SK-N-SH (cell line): ENCODE measurements at regions of chr3 and their contacts with region 1.

Region 1: DNA sequence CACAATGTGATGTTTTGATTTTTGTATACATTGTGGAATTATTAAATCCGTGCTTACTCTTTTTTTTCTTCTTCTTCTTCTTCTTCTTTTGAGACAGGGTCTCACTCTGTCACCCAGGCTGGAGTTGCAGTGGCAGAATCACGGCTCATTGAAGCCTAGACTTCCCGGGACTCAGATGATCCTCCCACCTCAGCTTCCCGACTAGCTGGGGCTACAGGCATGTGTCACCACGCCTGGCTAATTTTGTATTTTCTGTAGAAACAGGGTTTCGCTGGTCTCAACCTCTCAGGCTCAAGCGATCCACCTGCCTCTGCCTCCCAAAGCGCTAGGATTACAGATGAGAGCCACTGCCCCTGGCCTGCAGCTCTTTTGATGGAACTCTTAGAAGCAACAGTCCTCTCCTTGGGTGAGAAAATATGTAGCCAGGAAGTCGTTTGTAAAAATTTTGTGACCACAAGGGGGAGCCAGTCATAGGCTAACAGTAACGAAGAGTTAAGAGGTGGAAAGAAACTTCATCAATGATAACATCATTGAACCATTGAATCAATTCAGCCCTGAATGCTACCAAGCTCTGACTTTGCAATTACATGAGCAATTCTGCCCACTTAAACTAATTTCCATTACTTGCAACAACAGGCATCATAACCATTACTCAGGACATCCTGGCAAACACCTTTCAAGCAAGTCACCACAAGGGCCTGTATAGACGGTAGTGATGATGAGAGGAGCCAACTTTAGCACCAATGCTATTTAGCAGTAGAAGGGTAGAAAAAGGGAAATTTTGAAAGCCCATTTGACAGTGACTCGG is 16.7 kb upstream of the CMTM7 start:
- DNase-seq: peak; percentile 53
- H3K4me3 ChIP-seq: no peak overlapping the region; a peak in 1 of 4 replicates
- H3K27ac ChIP-seq: no peak overlapping the region
- H3K4me1 ChIP-seq: no peaks in the 10 kb centered on the region
- H3K27me3 ChIP-seq: no peaks in the 10 kb centered on the region
- CTCF ChIP-seq: peak; percentile 72
- EP300 ChIP-seq: no peak
- RAD21 ChIP-seq: peak; percentile 67

Region 2: DNA sequence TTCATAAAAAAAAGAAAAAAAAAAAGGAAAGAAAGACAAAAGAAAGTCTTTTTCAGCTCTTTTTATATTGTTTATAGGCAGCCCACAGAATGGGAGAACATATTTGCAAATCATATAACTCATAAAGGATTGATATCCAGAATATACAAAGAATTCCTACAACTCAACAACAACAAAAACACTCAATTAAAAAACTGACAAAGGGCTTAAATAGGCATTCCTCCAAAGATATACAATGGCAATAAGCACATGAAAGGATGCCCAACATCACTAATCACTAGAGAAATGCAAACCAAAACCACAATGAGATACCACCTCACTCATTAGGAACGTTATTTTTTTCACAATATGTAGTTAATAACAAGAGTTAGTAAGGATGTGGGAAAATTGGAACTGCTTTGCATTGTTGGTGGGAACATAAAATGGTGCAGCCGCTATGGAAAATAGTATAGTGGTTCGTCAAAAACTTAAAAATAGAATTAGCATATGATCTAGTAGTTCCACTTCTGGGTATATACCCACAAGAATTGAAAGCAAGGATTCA is 190.7 kb before region 1 on chr3:
- CTCF ChIA-PET with region 1: no interaction called
- POLR2A ChIA-PET with region 1: no interaction called
- DNase-seq: no peak
- H3K4me3 ChIP-seq: no peak overlapping the region
- H3K27ac ChIP-seq: no peak overlapping the region
- H3K4me1 ChIP-seq: no peaks in the 10 kb centered on the region; a peak in 1 of 4 replicates
- H3K27me3 ChIP-seq: no peaks in the 10 kb centered on the region
- CTCF ChIP-seq: no peak
- EP300 ChIP-seq: no peak
- RAD21 ChIP-seq: no peak

Region 3: DNA sequence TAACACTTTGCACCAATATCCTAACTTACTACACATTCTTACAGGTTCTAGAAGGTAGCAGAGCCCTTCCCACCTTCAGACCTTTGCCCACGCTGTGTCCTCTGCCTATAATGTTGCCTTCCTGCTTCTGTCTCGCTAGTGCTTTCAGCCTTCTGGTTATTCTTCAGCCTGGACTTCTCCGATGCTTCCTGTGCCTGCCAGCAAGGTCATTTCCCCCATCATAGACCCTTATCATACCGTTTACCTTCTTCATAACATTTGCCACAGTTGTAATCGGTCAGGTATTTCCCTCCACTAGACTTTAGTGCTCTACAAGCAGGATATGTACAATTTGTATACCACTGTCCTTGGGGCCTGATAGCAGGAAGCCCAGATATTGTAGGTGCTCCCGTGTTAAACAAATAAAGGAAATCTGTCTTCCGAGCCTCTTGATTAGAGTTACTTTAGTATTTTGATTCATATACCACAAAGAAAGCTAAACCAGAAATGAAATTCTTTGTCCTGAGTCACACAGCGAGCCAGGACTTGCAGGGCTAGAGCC is 19.2 kb before region 1 on chr3:
- CTCF ChIA-PET with region 1: interaction called, 15 read pairs
- POLR2A ChIA-PET with region 1: no interaction called
- DNase-seq: no peak
- H3K4me3 ChIP-seq: no peak overlapping the region
- H3K27ac ChIP-seq: no peak overlapping the region
- H3K4me1 ChIP-seq: no peaks in the 10 kb centered on the region
- H3K27me3 ChIP-seq: no peaks in the 10 kb centered on the region
- CTCF ChIP-seq: no peak
- EP300 ChIP-seq: no peak
- RAD21 ChIP-seq: no peak

Region 4: DNA sequence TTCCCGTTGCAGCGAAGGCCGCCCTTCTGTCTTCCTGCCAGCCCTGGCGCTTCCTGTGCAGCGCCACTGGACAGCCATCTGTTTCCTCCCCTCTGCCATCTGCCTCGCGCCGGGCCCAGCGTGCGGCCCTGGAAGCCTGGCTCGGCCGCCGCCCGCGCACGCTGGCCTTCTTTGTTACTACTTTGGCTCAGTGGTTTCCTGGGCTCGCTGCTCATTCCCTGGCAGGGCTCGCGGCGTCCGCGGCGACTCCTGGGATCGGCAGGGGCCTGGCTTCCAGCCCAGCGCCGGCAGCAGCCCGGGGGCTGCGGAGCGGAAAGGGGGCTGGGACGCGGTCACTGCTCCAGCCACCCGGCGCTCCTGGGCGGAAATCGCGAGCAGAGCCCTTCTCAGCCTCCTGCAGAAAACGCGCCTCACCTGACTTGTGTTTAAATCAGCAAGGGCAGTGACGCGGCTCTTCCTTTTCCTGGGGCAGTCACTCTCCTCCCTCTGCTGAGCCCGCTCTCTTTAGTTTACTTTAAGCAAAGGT is 26.6 kb after region 1 on chr3:
- CTCF ChIA-PET with region 1: interaction called, 34 read pairs
- POLR2A ChIA-PET with region 1: no interaction called
- DNase-seq: peak; percentile 91
- H3K4me3 ChIP-seq: peak overlapping the region; percentile 40 to 54
- H3K27ac ChIP-seq: peak overlapping the region; percentile 76 to 97
- H3K4me1 ChIP-seq: peaks cover 7 to 8% of the 10 kb centered on the region in 2 experiments; a peak in 3 of 4 replicates
- H3K27me3 ChIP-seq: no peaks in the 10 kb centered on the region
- CTCF ChIP-seq: no peak
- EP300 ChIP-seq: no peak
- RAD21 ChIP-seq: no peak

Region 5: GRCh38 chr3:32413845-32414519 is 39.0 kb after region 1 on chr3:
- CTCF ChIA-PET with region 1: no interaction called
- POLR2A ChIA-PET with region 1: no interaction called
- DNase-seq: no peak
- H3K4me3 ChIP-seq: no peak overlapping the region
- H3K27ac ChIP-seq: peak overlapping the region in 1 of 2 experiments; percentile 34; a peak in 2 of 4 replicates
- H3K4me1 ChIP-seq: peaks cover 0 to 18% of the 10 kb centered on the region in 2 experiments; a peak in 3 of 4 replicates
- H3K27me3 ChIP-seq: no peaks in the 10 kb centered on the region
- CTCF ChIP-seq: no peak
- EP300 ChIP-seq: no peak
- RAD21 ChIP-seq: no peak